ENCODE measurements at regions of chr15 and their contacts with region 1.

Region 1: GRCh38 chr15:53378096-53378800 is 381.2 kb downstream of the WDR72 start:
- DNase-seq: no peak
- H3K4me3 ChIP-seq: no peak overlapping the region
- H3K27ac ChIP-seq: no peak overlapping the region
- H3K4me1 ChIP-seq: no peaks in the 10 kb centered on the region
- H3K27me3 ChIP-seq: no peaks in the 10 kb centered on the region
- CTCF ChIP-seq: no peak
- EP300 ChIP-seq: no peak
- POLR2A ChIP-seq: no peak

Region 2: DNA sequence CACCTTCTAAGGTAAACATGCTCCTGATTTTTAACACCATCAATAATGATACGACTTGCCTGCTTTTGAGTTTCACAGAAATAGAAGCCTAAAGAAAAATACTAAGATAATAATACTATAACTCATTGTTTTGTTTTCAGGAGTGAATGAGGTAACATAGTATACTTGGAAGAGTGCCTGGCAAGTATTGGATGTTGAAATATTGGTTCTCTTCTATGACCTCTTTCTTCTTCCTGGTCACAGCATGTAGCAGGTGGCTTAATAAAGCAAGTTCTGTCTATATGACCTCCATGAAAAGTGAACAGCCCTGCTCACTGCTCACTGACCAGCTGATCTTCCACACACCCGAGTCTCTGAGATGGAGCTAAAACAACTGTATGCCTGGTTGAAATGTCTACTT is 275.8 kb before region 1 on chr15:
- in situ Hi-C with region 1: no loop called
- intact Hi-C with region 1: loop called (anchors 10 kb)
- DNase-seq: no peak
- H3K4me3 ChIP-seq: no peak overlapping the region
- H3K27ac ChIP-seq: no peak overlapping the region
- H3K4me1 ChIP-seq: no peaks in the 10 kb centered on the region
- H3K27me3 ChIP-seq: no peaks in the 10 kb centered on the region
- CTCF ChIP-seq: no peak
- EP300 ChIP-seq: no peak
- POLR2A ChIP-seq: no peak